HEK293T (cell line): ENCODE measurements at regions of chr1 and their contacts with region 1.

Region 1: GRCh38 chr1:237799762-237800474 is 90.8 kb downstream of the ZP4 start:
- DNase-seq: peak; percentile 91

Region 2: GRCh38 chr1:237677979-237678378 is 121.9 kb before region 1 on chr1:
- CTCF ChIA-PET with region 1: interaction called, 17 read pairs
- POLR2A ChIA-PET with region 1: no interaction called
- DNase-seq: no peak

Region 3: GRCh38 chr1:238161955-238162354 is 362.0 kb after region 1 on chr1:
- CTCF ChIA-PET with region 1: no interaction called
- POLR2A ChIA-PET with region 1: no interaction called
- DNase-seq: no peak